Dendritic cell treated with granulocyte-macrophage colony-stimulating factor and Interleukin-4, amounts not matched to agents 40 ng/mL and 50 ng/mL, for 4 days (primary cell): ENCODE measurements at regions of chr12 and their contacts with region 1.

Region 1: DNA sequence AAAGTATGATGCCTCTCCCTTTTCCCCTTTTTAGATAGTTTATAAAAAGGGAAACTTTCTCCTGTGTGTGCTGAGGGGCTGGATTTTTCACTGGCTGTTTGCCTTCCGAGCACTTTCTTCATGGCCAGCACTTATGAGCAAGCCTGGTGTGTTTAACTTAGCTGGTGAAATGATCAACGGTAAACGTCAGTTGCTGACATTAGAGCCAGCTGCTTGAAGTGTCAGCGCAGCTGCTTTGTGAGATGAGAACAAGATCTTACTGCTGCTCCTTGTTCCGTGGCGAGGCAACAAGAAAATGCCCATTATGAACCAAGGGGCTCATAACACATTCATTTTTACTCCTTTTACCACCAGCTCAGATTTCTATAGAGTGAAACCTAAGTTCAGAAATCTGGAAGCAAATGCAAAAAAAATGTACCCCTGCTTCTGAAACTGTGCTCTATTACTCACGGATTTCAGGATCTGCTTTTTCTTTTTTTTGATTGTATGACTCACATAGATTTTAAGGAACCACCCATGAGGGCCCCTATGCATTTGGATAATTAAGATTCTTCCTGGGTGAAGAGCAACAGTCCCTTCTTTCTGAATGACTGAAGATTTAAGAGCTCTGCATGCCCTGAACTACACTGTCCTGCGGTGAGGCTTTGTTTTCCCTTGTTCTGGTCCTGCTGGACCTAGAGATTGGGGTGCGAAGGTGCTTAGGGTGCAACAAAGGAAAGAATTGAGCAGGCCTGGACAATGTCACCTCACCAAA is 74.3 kb upstream of the CPM start:
- H3K4me3 Mint-ChIP-seq: peak overlapping the region; percentile 64
- H3K27ac Mint-ChIP-seq: peak overlapping the region; percentile 93
- H3K4me1 Mint-ChIP-seq: peaks cover 48% of the 10 kb centered on the region
- H3K27me3 Mint-ChIP-seq: no peaks in the 10 kb centered on the region

Region 2: DNA sequence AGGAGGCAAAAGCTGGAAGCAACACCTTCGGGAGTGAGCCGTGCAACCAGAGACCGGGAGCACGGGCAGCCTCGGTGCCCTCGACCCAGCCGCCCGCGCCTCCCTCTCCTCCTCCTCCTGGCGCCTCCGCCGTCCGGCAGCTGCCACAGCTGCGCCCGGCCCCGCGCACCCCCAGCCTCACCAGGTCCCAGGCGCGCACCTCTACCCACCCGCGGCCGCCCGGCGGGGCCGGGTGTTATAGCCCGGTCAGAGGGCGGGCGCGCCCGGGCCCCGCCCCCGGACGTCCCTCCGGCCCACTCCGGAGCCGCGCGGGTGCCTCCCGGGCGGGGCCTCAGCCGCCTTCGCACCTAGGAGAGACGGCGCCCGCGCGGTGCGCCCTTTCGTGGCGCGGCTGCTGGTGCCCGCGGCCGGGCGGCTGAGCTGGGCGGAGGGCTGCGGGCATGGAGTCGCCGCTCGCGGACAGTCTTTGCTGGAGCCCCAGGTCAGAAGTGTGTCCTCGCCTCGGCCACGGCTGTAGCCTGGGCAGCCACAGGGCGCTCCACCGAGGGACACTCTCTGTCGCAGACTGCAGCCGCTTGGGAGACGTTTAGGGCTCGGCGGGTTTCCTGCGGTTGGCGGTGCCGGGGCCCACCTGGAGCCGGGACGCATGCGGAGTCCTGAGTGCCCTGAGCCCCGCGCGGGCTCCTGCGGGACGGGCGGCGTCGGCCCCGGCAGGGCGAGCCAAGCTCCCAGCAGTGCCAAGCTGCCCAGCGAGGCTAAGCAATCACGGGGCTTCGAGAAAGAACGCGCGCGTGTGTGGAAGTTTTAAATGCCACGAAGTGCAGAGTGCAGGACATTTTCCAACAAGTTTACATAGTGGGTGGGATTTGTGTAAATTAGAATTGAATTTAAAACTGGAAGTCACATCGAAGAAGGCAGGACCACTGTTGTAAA is 74.1 kb before region 1 on chr12 and contains the start of gene CPM:
- intact Hi-C with region 1: loop called (anchors 2 kb)
- H3K4me3 Mint-ChIP-seq: peak within 1 kb of the TSS; percentile 85
- H3K27ac Mint-ChIP-seq: peak within 1 kb of the TSS; percentile 89
- H3K4me1 Mint-ChIP-seq: peaks cover 12% of the 10 kb centered on the region
- H3K27me3 Mint-ChIP-seq: peaks cover 7% of the 10 kb centered on the region

Region 3: GRCh38 chr12:69039894-69040293 is 32.6 kb after region 1 on chr12:
- intact Hi-C with region 1: loop called (anchors 5 kb)
- H3K4me3 Mint-ChIP-seq: no peak overlapping the region
- H3K27ac Mint-ChIP-seq: peak overlapping the region; percentile 81
- H3K4me1 Mint-ChIP-seq: peaks cover 17% of the 10 kb centered on the region
- H3K27me3 Mint-ChIP-seq: no peaks in the 10 kb centered on the region

Region 4: DNA sequence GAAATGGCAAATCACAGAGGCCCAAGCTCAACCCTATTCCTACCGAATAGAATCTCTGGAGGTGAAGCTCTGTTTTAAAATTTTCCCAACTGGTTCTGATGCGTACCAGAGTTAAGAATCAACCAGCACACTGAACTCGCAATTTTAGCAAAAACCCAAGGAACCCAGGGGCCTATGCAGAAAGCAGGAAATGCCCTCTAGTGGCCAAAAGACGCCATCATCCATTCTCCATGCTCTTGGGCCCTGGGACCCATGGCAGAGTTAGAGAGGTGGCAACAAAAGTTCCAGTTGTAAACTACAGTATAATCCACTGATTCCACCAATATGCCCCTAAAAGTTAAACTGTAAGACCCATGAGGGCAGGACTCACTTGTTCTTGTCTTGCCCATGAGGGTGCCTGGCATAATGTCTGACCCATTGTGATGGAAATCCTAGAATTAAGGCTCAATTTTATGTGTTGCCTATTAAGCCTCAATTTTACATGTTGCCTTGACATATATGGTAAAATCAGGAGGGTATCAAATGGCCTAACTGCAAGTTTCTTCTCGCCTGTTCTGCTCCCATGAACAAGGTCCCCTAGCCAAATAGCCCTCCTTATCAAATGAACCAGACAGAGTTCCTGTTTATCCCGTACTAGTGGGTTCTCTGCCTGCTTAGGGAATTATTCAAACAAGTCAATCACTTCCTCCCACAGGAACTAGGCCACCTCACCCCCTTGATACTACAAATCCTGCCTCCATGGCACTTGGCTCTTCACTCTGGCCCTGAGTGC is 63.2 kb after region 1 on chr12:
- intact Hi-C with region 1: loop called (anchors 2 kb)
- H3K4me3 Mint-ChIP-seq: no peak overlapping the region
- H3K27ac Mint-ChIP-seq: peak overlapping the region; percentile 23
- H3K4me1 Mint-ChIP-seq: peaks cover 12% of the 10 kb centered on the region
- H3K27me3 Mint-ChIP-seq: peaks cover 1% of the 10 kb centered on the region